BJ (cell line): ENCODE measurements at regions of chr19 and their contacts with region 1.

Region 1: DNA sequence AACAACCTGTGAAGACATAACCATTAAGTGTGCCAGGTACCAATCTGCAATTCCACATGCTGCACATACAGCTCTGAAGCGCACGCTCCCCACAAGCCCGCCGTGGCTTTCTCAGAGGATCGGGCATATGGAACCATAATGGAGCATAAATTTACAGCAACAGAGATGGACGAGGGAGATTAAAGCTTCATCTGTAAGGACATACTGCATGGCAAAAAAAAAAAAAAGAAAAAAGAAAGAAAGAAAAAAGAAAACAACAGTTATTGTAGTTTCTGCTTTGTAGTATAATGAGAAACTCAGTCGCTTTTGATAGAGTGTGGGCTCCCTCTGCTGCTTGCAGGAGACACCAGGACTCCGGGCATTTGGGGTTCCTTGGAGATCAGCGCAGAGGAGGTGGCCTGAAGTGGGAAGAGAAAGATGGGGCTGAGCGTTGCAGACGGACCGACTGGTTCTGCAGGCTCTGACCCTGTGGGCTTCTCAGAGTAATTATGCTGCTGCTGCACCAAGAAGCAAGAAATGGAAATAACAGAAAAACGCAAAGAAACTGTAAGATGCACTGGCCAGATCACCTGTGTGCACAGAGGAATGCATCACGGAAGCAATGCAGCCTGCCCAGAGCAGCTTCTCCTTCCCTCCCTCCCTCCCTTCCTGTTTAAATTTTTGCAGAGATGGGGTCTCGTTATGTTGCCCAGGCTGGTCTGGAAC is 10.8 kb upstream of the PDCD5 start:
- DNase-seq: no peak
- H3K4me3 ChIP-seq: no peak overlapping the region
- H3K27me3 ChIP-seq: no peaks in the 10 kb centered on the region
- CTCF ChIP-seq: peak; percentile 77

Region 2: GRCh38 chr19:32287811-32288227 is 282.4 kb before region 1 on chr19:
- CTCF ChIA-PET with region 1: interaction called, 43 read pairs
- POLR2A ChIA-PET with region 1: no interaction called
- DNase-seq: peak; percentile 3
- H3K4me3 ChIP-seq: no peak overlapping the region
- H3K27me3 ChIP-seq: no peaks in the 10 kb centered on the region
- CTCF ChIP-seq: peak; percentile 65

Region 3: GRCh38 chr19:32339988-32340874 is 230.0 kb before region 1 on chr19:
- CTCF ChIA-PET with region 1: interaction called, 12 read pairs
- POLR2A ChIA-PET with region 1: no interaction called
- DNase-seq: no peak
- H3K4me3 ChIP-seq: no peak overlapping the region
- H3K27me3 ChIP-seq: no peaks in the 10 kb centered on the region
- CTCF ChIP-seq: peak; percentile 76

Region 4: DNA sequence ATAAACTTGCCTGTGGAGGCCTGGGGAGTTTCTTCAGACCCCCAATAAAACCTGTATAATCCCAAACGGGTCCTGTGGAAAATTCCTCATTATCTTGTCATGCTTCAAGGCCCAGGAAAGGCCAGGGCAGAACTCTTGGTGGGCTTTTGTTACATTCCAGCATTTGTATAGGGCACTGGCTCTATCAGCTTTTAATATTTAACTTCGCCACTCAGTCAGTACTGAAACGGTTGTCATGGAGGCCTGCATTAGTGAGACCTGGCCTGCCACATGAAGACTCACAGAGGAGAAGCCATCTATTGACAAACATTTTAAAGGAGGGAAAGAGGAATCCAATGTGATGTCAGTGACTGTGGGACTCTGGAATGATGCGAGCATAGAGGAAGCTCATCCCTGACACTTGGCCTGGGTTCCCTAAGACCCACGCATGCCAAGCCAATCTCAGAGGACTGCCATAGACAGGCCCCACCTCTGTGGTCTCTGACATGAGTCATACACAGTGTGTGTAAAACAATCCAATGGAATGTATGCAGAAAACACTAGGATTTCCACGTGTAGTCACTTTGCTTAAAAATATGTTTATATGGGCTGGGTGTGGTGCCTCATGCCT is 172.6 kb before region 1 on chr19:
- CTCF ChIA-PET with region 1: no interaction called
- POLR2A ChIA-PET with region 1: interaction called, 11 read pairs
- DNase-seq: no peak
- H3K4me3 ChIP-seq: no peak overlapping the region
- H3K27me3 ChIP-seq: no peaks in the 10 kb centered on the region
- CTCF ChIP-seq: no peak

Region 5: DNA sequence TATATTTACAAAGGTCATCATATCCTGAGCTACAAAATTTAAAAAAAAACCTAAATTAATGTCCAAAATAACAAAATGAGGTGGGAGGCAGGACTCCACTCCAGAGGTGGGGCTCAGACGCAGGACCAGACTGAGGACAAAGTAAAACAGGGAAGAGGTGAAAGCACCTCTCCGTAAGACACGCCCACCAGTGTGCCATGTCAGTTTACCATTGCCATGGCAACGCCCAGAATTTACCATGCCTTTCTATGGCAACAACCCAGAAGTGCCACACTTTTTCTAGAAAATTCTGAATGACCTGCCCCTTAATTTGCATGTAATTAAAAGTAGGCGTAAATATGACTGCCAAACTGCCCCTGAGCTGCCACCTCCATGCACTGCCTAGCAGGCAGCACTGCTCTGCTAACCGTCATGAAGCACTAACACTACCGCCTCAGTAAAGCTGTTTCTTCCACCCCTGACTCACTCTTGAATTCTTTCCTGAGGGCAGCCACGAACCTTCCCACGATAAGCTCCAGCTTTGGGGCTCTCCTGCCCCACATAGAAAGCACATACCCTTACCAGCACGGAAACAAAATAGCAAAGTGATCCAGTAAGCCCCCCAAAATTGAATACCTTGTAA is 11.5 kb before region 1 on chr19:
- CTCF ChIA-PET with region 1: interaction called, 5 read pairs
- POLR2A ChIA-PET with region 1: interaction called, 13 read pairs
- DNase-seq: no peak
- H3K4me3 ChIP-seq: no peak overlapping the region
- H3K27me3 ChIP-seq: no peaks in the 10 kb centered on the region
- CTCF ChIP-seq: no peak

Region 6: DNA sequence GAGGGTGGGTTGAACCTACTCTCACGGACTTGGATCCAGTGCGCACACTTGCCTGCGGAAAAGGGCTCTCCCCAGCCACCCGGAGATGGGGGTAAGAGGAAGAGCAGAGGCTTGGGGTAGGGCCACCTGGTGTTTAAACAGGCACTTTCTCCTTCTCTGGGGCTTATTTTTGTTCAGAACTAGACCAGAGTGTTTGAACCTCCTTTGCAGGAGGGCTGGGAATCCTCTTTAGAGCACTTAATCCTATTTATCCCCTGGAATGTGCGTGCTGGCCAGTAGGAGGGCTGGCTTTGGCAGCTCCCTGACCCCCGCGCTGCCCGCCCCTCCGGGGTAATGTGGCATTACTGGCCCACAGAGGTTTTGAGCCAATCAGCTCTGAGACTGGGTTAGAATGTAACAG is 107.4 kb after region 1 on chr19:
- CTCF ChIA-PET with region 1: no interaction called
- POLR2A ChIA-PET with region 1: no interaction called
- DNase-seq: no peak
- H3K4me3 ChIP-seq: no peak overlapping the region
- H3K27me3 ChIP-seq: peaks cover 18% of the 10 kb centered on the region
- CTCF ChIP-seq: no peak